Natural killer cell (primary cell): ENCODE measurements at regions of chr17 and their contacts with region 1.

Region 1: GRCh38 chr17:40542558-40543411 is 22.5 kb downstream of the CCR7 start:
- DNase-seq: peak in 1 of 2 donors; percentile 73
- ATAC-seq: peak in 1 of 3 donors; percentile 24
- H3K4me3 ChIP-seq: no peak overlapping the region
- H3K4me3 Mint-ChIP-seq: peak overlapping the region; percentile 35
- H3K27ac ChIP-seq: peak overlapping the region; percentile 65
- H3K27ac Mint-ChIP-seq: peak overlapping the region; percentile 64 to 87
- H3K4me1 ChIP-seq: peaks cover 77% of the 10 kb centered on the region
- H3K4me1 Mint-ChIP-seq: peaks cover 43 to 49% of the 10 kb centered on the region in 2 donors
- H3K27me3 ChIP-seq: peaks cover 7% of the 10 kb centered on the region
- H3K27me3 Mint-ChIP-seq: peaks cover 0 to 13% of the 10 kb centered on the region in 2 donors
- CTCF ChIP-seq: no peak

Region 2: GRCh38 chr17:40317880-40318829 is 224.6 kb before region 1 on chr17:
- intact Hi-C with region 1: loop called (anchors 5 kb)
- DNase-seq: peak; percentile 89 to 95
- ATAC-seq: peak; percentile 61 to 86 (median 71)
- H3K4me3 ChIP-seq: peak overlapping the region; percentile 79
- H3K4me3 Mint-ChIP-seq: peak overlapping the region; percentile 94
- H3K27ac ChIP-seq: peak overlapping the region; percentile 98
- H3K27ac Mint-ChIP-seq: peak overlapping the region; percentile 99
- H3K4me1 ChIP-seq: peaks cover 94% of the 10 kb centered on the region
- H3K4me1 Mint-ChIP-seq: peaks cover 78 to 95% of the 10 kb centered on the region in 2 donors
- H3K27me3 ChIP-seq: no peaks in the 10 kb centered on the region
- H3K27me3 Mint-ChIP-seq: no peaks in the 10 kb centered on the region
- CTCF ChIP-seq: no peak

Region 3: GRCh38 chr17:40516581-40517285 is 26.1 kb before region 1 on chr17:
- intact Hi-C with region 1: loop called (anchors 1 kb)
- DNase-seq: peak; percentile 60 to 92
- ATAC-seq: peak; percentile 71 to 85 (median 79)
- H3K4me3 ChIP-seq: peak overlapping the region; percentile 30
- H3K4me3 Mint-ChIP-seq: peak overlapping the region; percentile 87
- H3K27ac ChIP-seq: peak overlapping the region; percentile 15
- H3K27ac Mint-ChIP-seq: peak overlapping the region; percentile 70 to 86
- H3K4me1 ChIP-seq: peaks cover 64% of the 10 kb centered on the region
- H3K4me1 Mint-ChIP-seq: peaks cover 63 to 71% of the 10 kb centered on the region in 2 donors
- H3K27me3 ChIP-seq: no peaks in the 10 kb centered on the region
- H3K27me3 Mint-ChIP-seq: peaks cover 0 to 14% of the 10 kb centered on the region in 2 donors
- CTCF ChIP-seq: no peak

Region 4: GRCh38 chr17:40598663-40599467 is 56.1 kb after region 1 on chr17:
- intact Hi-C with region 1: no loop called
- DNase-seq: peak in 1 of 2 donors; percentile 92
- ATAC-seq: peak; percentile 26 to 73 (median 62)
- H3K4me3 ChIP-seq: no peak overlapping the region
- H3K4me3 Mint-ChIP-seq: no peak overlapping the region
- H3K27ac ChIP-seq: peak overlapping the region; percentile 74
- H3K27ac Mint-ChIP-seq: peak overlapping the region in 1 of 2 donors; percentile 76
- H3K4me1 ChIP-seq: peaks cover 42% of the 10 kb centered on the region
- H3K4me1 Mint-ChIP-seq: no peaks in the 10 kb centered on the region
- H3K27me3 ChIP-seq: no peaks in the 10 kb centered on the region
- H3K27me3 Mint-ChIP-seq: peaks cover 0 to 2% of the 10 kb centered on the region in 2 donors
- CTCF ChIP-seq: no peak